ENCODE measurements at regions of chr19 and their contacts with region 1.

Region 1: GRCh38 chr19:2236314-2237050 is at the starts of genes PLEKHJ1 and SF3A2:
- DNase-seq: peak; percentile 97
- ATAC-seq: peak; percentile 89 to 97 (median 95)
- H3K4me3 ChIP-seq: peak within 1 kb of the TSS; percentile 71 to 95 (median 89)
- H3K27ac ChIP-seq: peak within 1 kb of the TSS; percentile 92 to 100 (median 99)
- H3K4me1 ChIP-seq: peaks cover 29 to 82% (median 56%) of the 10 kb centered on the region in 9 donors
- H3K27me3 ChIP-seq: no peaks in the 10 kb centered on the region
- CTCF ChIP-seq: peak; percentile 97 to 100 (median 99)
- total RNA-seq, gene PLEKHJ1: 40.0 to 76.5 (median 45.0) TPM
- total RNA-seq, gene SF3A2: 24.6 to 45.2 (median 30.4) TPM

Region 2: GRCh38 chr19:2161688-2162053 is 74.8 kb before region 1 on chr19:
- intact Hi-C with region 1: loop called in 8 of 10 experiments (anchors 2 to 10 kb)
- DNase-seq: no peak
- ATAC-seq: no peak
- H3K4me3 ChIP-seq: no peak overlapping the region
- H3K27ac ChIP-seq: no peak overlapping the region
- H3K4me1 ChIP-seq: peaks cover 11 to 32% (median 25%) of the 10 kb centered on the region in 9 donors
- H3K27me3 ChIP-seq: no peaks in the 10 kb centered on the region
- CTCF ChIP-seq: no peak

Region 3: GRCh38 chr19:2176337-2176994 is 60.0 kb before region 1 on chr19:
- intact Hi-C with region 1: loop called in 1 of 10 experiments (anchors 5 kb)
- DNase-seq: no peak
- ATAC-seq: peak in 6 of 8 donors; percentile 1 to 78 (median 39)
- H3K4me3 ChIP-seq: no peak overlapping the region
- H3K27ac ChIP-seq: peak overlapping the region in 2 of 10 donors; percentile 3 to 43
- H3K4me1 ChIP-seq: peaks cover 10 to 72% (median 20%) of the 10 kb centered on the region in 9 donors
- H3K27me3 ChIP-seq: no peaks in the 10 kb centered on the region
- CTCF ChIP-seq: peak in 1 of 9 donors; percentile 12

Region 4: DNA sequence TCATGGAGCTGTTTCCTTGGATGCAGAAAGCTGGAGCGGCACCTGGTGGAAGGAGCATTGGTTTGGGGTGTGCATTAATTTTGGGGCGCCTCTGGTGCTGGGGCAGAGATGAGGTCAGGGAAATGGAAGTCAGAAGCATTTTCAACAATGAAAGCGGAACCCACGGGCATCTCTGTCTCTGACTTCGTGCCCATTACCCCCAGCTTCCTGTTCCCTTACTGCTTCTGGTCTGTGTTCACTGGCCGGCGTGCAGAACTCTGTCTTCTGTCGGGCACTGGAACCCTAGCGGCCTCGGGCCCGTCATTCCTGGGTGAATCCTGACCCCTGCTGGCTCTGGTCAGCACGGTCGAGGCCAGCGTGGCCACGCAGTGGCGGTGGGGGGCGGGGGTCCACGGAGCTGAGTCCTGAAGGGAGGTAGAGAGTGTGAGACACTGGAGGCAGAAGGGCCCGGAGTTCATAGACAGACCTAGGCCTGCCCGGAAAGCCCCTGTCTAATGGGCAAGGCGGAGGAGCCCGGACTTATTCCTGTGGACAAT is 79.4 kb after region 1 on chr19:
- intact Hi-C with region 1: loop called in 5 of 10 experiments (anchors 5 to 10 kb)
- DNase-seq: peak; percentile 71 to 72
- ATAC-seq: peak; percentile 89 to 94 (median 93)
- H3K4me3 ChIP-seq: no peak overlapping the region
- H3K27ac ChIP-seq: peak overlapping the region in 1 of 10 donors; percentile 70
- H3K4me1 ChIP-seq: peaks cover 0 to 22% (median 6%) of the 10 kb centered on the region in 9 donors
- H3K27me3 ChIP-seq: peaks cover 0 to 27% (median 26%) of the 10 kb centered on the region in 7 donors
- CTCF ChIP-seq: peak; percentile 31 to 76 (median 69)

Measured in heart right ventricle (tissue), 16 donors.